Mammary epithelial cell (primary cell): ENCODE measurements at regions of chr1 and their contacts with region 1.

Region 1: GRCh38 chr1:155172732-155173477 is at the start of gene KRTCAP2:
- DNase-seq: peak; percentile 91
- H3K4me3 ChIP-seq: peak within 1 kb of the TSS; percentile 77 to 97 (median 96)
- H3K27ac ChIP-seq: peak within 1 kb of the TSS; percentile 63
- H3K4me1 ChIP-seq: peaks cover 15% of the 10 kb centered on the region
- H3K27me3 ChIP-seq: no peaks in the 10 kb centered on the region
- CTCF ChIP-seq: peak; percentile 90 to 97
- total RNA-seq, gene KRTCAP2: 62.7 to 177 TPM

Region 2: DNA sequence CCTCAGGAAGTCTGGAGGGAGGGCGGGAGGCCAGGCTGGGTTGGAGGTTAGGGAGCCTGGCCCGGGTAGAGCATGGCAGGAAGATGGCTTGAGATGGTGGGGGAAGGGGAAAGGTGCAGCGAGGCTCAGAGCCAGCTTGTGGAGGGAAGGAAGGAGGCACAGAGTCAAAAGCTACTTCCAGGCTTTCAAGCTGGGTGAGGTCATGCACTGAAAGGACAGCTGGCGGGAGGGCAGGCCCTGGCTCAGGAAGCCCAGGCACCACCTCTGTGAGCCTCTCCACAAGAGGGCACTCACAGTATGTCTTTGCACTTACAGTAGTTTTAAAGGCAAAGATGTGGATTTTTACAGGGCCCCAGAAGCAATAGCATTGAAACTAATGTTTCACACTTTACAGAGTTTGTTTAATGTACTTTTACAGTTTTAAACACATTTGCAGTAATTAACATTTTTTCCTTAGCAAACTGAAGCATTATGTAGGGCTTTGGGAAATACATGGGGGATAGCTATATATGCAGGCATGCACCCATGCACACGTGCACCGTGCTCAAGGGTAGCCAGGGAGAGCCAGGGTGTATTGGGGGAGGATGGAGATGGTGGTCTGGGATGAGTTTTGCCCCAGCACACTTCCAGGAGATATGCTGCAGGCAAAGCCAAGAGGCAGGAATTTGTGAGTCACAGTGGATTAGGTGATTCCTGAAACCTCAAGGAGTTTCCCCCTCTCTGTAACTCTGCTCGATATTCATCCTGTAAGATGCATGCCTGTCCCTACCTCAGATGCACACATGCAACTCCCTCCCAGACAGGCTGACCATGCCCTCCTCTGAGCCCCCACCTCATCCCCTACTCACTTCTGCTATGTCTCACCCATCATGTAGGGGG is 127.9 kb before region 1 on chr1:
- CTCF ChIA-PET with region 1: interaction called, 12 read pairs
- dilution Hi-C with region 1: no loop called
- in situ Hi-C with region 1: no loop called
- intact Hi-C with region 1: no loop called
- DNase-seq: peak; percentile 55
- H3K4me3 ChIP-seq: no peak overlapping the region
- H3K27ac ChIP-seq: no peak overlapping the region
- H3K4me1 ChIP-seq: peaks cover 20% of the 10 kb centered on the region
- H3K27me3 ChIP-seq: no peaks in the 10 kb centered on the region
- CTCF ChIP-seq: peak; percentile 76 to 84

Region 3: DNA sequence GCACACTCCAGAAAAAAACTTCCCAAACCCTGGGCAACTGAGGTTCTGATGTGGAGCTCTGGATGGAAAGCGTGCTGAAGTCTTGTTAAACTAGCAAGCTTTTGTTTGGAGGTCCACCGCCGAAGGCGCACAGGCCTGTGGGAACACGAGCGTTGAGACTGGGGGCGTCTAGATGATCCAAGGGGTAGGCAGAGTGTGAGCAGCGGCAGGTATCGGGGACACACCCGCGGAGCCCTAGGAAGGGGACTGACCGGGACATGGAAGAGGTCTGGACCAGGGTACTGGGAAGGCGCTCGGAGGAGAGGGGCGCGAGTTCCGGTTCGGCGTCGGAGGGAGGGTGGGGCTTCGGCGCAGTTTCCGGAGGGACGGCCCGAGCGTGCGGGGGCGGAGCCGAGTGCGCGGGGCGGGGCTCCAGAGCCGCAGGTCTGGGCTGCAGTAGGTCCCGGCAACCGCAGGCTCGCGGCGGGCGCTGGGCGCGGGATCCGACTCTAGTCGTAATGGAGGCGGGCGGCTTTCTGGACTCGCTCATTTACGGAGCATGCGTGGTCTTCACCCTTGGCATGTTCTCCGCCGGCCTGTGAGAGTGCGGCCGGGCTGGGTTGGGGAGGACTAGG is 37.4 kb before region 1 on chr1 and contains the start of gene SLC50A1:
- CTCF ChIA-PET with region 1: no interaction called
- dilution Hi-C with region 1: no loop called
- in situ Hi-C with region 1: no loop called
- intact Hi-C with region 1: loop called (anchors 1 kb)
- DNase-seq: peak; percentile 91
- H3K4me3 ChIP-seq: peak within 1 kb of the TSS; percentile 64 to 80 (median 70)
- H3K27ac ChIP-seq: peak within 1 kb of the TSS; percentile 98
- H3K4me1 ChIP-seq: peaks cover 44% of the 10 kb centered on the region
- H3K27me3 ChIP-seq: no peaks in the 10 kb centered on the region
- CTCF ChIP-seq: peak in 1 of 2 donors; percentile 24
- total RNA-seq, gene SLC50A1: 31.3 to 40.2 TPM

Region 4: DNA sequence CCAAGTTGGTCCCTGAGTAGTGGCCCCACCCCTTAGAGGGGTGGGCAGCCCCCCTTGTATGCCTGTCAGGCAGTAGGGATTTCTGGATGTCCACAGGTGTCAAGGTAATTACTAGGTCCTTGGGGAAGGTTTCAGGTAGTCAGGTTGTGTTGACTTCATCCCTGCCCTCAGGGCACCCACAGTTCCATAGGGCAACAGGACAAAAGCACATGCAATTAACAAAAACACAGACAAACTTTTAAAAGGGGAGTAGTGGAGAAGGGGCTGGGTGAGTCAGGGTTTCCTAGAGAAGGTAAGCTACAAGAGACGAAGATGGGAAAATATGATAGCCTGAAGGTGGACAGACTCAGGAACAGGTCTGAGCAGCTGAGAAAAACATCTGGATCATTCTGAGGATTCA is 13.9 kb before region 1 on chr1:
- CTCF ChIA-PET with region 1: no interaction called
- dilution Hi-C with region 1: no loop called
- in situ Hi-C with region 1: no loop called
- intact Hi-C with region 1: no loop called
- DNase-seq: no peak
- H3K4me3 ChIP-seq: no peak overlapping the region
- H3K27ac ChIP-seq: no peak overlapping the region
- H3K4me1 ChIP-seq: no peaks in the 10 kb centered on the region
- H3K27me3 ChIP-seq: no peaks in the 10 kb centered on the region
- CTCF ChIP-seq: no peak

Region 5: GRCh38 chr1:155208541-155209311 is 35.8 kb after region 1 on chr1 and contains the start of gene MTX1:
- CTCF ChIA-PET with region 1: interaction called, 3 read pairs
- dilution Hi-C with region 1: no loop called
- in situ Hi-C with region 1: no loop called
- intact Hi-C with region 1: loop called (anchors 1 kb)
- DNase-seq: peak; percentile 74
- H3K4me3 ChIP-seq: peak within 1 kb of the TSS; percentile 86 to 100 (median 100)
- H3K27ac ChIP-seq: peak within 1 kb of the TSS; percentile 98
- H3K4me1 ChIP-seq: peaks cover 27% of the 10 kb centered on the region
- H3K27me3 ChIP-seq: no peaks in the 10 kb centered on the region
- CTCF ChIP-seq: no peak
- total RNA-seq, gene MTX1: 34.2 to 49.3 TPM

Region 6: DNA sequence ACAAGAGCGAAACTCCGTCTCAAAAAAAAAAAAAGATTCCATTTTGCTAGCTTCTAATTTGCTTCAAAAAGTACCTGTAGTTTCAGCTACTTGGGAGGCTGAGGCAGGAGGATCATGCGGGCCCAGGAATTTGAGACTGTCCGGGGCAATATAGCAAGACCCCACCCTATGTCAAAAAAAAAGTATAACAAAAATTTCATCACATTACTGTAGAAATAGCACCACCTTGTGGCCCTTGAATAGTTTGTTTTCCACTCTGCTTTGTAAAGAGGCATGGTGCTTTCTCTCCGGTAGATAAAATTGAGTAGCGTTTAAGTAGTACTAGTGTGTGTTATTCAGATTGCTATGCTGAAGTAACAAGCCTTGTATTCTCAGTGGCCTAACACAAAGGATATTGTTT is 418.9 kb after region 1 on chr1:
- CTCF ChIA-PET with region 1: no interaction called
- dilution Hi-C with region 1: no loop called
- in situ Hi-C with region 1: no loop called
- intact Hi-C with region 1: loop called (anchors 5 kb)
- DNase-seq: peak; percentile 33
- H3K4me3 ChIP-seq: no peak overlapping the region
- H3K27ac ChIP-seq: no peak overlapping the region
- H3K4me1 ChIP-seq: no peaks in the 10 kb centered on the region
- H3K27me3 ChIP-seq: no peaks in the 10 kb centered on the region
- CTCF ChIP-seq: peak; percentile 43 to 50